OCI-LY7 (cell line): ENCODE measurements at regions of chr17 and their contacts with region 1.

Region 1: DNA sequence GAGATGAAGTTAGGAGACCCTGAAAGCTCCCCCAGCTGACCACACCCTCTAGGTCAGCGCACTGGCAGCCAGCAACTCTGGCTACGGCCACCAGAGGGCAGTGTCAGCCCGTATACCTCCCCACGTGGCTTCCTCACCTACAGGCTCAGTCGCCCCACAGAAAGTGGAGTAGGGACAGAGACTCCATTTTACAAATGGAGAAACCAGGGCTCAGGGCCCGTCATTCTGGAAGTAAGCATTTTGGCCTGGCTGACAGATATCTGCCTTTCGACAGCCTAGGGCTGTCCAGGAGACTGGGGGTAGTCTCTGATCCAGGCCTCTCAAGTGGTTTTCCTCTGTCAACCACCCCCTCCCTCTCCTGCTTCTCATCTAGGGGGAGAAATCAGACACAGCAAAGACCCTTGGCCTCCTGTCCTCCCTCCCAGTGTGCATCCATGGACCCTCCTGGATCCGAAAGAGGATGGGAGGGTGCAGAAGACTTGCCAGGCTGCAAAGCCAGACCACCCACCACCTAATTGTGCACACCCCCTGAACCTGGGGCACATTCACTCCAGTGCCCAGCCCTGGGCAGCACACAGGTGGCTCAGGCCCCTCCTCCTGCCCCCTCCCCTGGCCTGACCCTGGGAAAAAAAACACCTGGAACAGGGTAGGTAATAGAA is 3.8 kb upstream of the HAP1 start:
- DNase-seq: peak; percentile 84
- H3K4me3 ChIP-seq: no peak overlapping the region
- H3K27ac ChIP-seq: no peak overlapping the region
- H3K4me1 ChIP-seq: peaks cover 4% of the 10 kb centered on the region
- CTCF ChIP-seq: peak; percentile 98

Region 2: GRCh38 chr17:41773190-41773588 is 35.0 kb after region 1 on chr17:
- CTCF ChIA-PET with region 1: no interaction called
- POLR2A ChIA-PET with region 1: no interaction called
- intact Hi-C with region 1: no loop called
- DNase-seq: no peak
- H3K4me3 ChIP-seq: no peak overlapping the region
- H3K27ac ChIP-seq: no peak overlapping the region
- H3K4me1 ChIP-seq: peaks cover 29% of the 10 kb centered on the region
- CTCF ChIP-seq: no peak

Region 3: DNA sequence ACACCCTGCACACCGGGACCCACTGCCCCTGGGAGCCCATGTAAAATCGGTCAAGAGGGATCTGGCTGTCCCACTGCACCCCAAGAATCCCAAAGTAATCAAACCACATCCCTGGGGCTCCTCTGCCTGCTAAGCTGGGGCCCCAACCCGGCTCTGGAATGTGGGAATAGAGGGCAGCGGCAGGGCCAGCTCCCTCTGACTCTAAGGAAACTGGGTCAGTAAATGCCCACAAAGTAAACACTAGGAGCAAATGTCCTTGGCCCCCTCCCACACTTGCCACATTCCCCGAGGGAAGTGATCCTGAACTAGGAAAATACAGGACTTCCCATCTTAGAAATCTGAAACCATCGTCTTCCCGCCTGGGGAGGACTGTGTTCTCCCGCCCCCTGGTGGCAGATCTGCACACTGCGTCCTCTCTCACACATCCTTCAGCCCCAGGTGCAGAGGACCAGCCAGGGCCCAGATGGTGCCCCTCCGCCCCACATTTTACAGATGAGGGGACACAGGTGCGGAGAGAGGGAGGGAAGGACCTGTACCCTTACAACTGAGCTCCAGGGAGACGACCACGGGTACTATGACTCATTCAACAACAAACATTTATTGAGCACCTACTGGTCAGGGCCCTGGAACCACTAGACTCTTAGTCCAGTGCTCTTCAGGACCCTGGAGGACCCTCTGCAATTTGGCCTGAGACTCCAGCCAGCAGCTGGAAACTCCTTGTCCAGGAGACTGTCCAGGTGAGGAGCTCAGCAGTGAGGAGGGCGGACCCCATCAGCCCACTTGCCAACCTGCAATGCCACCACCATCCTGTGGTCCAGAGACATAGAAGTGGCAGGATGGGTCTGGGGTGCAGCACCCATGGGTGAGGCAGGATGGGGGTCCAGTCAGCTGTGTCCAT is 63.4 kb after region 1 on chr17:
- CTCF ChIA-PET with region 1: no interaction called
- POLR2A ChIA-PET with region 1: no interaction called
- intact Hi-C with region 1: loop called (anchors 1 kb)
- DNase-seq: peak; percentile 82
- H3K4me3 ChIP-seq: no peak overlapping the region
- H3K27ac ChIP-seq: no peak overlapping the region
- H3K4me1 ChIP-seq: peaks cover 28% of the 10 kb centered on the region
- CTCF ChIP-seq: peak; percentile 97

Region 4: DNA sequence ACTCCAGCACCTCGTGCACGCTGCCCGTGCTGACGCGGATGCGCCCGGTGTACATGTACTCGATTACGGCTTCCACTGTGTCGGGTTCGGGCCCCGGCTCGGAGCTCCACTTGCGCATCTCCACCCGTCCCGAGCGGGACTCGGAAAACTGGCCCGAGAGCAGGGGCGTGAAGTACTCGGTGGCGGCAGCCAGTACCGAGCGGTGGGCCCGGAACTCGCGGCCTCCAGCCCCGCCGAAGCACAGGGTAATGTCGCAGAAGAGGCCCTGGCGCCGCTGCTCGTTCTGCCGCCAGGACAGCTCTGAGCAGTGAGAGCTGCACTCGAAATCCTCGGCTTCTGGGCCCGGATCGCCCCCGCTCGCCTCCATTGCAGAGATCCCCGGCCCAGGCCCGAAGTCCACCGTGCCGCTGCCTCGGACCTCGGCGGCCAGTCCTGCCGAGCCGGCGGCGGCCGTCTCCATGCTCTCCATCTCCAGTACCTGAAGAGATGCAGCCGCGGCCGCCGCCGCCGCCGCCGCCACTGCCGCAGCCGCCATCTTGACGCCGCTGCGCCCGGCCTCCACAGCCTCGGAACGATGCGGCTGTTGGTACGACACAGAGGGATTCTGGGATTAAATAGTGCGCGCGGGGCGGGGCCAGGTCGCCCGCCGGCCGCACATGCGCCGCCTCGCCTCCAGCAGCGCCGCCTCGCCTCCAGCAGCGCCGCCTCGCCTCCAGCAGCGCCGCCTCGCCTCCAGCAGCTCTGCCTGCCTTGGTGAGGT is 126.8 kb after region 1 on chr17 and contains the start of gene KLHL11:
- CTCF ChIA-PET with region 1: no interaction called
- POLR2A ChIA-PET with region 1: no interaction called
- intact Hi-C with region 1: loop called (anchors 5 kb)
- DNase-seq: peak; percentile 92
- H3K4me3 ChIP-seq: peak within 1 kb of the TSS; percentile 92
- H3K27ac ChIP-seq: peak within 1 kb of the TSS; percentile 82
- H3K4me1 ChIP-seq: peaks cover 21% of the 10 kb centered on the region
- CTCF ChIP-seq: no peak
- total RNA-seq, gene KLHL11: 29.9 and 35.4 TPM in 2 replicates

Region 5: GRCh38 chr17:41959336-41960095 is 221.3 kb after region 1 on chr17:
- CTCF ChIA-PET with region 1: no interaction called
- POLR2A ChIA-PET with region 1: no interaction called
- intact Hi-C with region 1: loop called (anchors 1 kb)
- DNase-seq: peak; percentile 61
- H3K4me3 ChIP-seq: no peak overlapping the region
- H3K27ac ChIP-seq: no peak overlapping the region
- H3K4me1 ChIP-seq: peaks cover 17% of the 10 kb centered on the region
- CTCF ChIP-seq: peak; percentile 76